IMR-90 (cell line): ENCODE measurements at regions of chr3 and their contacts with region 1.

Region 1: GRCh38 chr3:49469936-49470713 is at the start of gene DAG1:
- DNase-seq: peak; percentile 95
- ATAC-seq: peak; percentile 91
- H3K4me3 ChIP-seq: peak within 1 kb of the TSS; percentile 91
- H3K27ac ChIP-seq: peak within 1 kb of the TSS; percentile 85
- H3K4me1 ChIP-seq: peaks cover 13% of the 10 kb centered on the region
- H3K27me3 ChIP-seq: no peaks in the 10 kb centered on the region
- CTCF ChIP-seq: no peak
- POLR2A ChIP-seq: peak; percentile 36
- RAD21 ChIP-seq: no peak
- total RNA-seq, gene DAG1: 30.8 and 31.0 TPM in 2 replicates

Region 2: GRCh38 chr3:49500732-49501609 is 30.8 kb after region 1 on chr3:
- CTCF ChIA-PET with region 1: no interaction called
- POLR2A ChIA-PET with region 1: no interaction called
- dilution Hi-C with region 1: no loop called
- in situ Hi-C with region 1: no loop called
- intact Hi-C with region 1: loop called (anchors 2 kb)
- DNase-seq: peak; percentile 99
- ATAC-seq: peak; percentile 92
- H3K4me3 ChIP-seq: no peak overlapping the region
- H3K27ac ChIP-seq: peak overlapping the region; percentile 54
- H3K4me1 ChIP-seq: peaks cover 14% of the 10 kb centered on the region
- H3K27me3 ChIP-seq: no peaks in the 10 kb centered on the region
- CTCF ChIP-seq: no peak
- POLR2A ChIP-seq: 0 out of 2 replicates have a peak, but pooled peaks have one; percentile 29
- RAD21 ChIP-seq: no peak